ENCODE measurements at regions of chr22 and their contacts with region 1.

Region 1: DNA sequence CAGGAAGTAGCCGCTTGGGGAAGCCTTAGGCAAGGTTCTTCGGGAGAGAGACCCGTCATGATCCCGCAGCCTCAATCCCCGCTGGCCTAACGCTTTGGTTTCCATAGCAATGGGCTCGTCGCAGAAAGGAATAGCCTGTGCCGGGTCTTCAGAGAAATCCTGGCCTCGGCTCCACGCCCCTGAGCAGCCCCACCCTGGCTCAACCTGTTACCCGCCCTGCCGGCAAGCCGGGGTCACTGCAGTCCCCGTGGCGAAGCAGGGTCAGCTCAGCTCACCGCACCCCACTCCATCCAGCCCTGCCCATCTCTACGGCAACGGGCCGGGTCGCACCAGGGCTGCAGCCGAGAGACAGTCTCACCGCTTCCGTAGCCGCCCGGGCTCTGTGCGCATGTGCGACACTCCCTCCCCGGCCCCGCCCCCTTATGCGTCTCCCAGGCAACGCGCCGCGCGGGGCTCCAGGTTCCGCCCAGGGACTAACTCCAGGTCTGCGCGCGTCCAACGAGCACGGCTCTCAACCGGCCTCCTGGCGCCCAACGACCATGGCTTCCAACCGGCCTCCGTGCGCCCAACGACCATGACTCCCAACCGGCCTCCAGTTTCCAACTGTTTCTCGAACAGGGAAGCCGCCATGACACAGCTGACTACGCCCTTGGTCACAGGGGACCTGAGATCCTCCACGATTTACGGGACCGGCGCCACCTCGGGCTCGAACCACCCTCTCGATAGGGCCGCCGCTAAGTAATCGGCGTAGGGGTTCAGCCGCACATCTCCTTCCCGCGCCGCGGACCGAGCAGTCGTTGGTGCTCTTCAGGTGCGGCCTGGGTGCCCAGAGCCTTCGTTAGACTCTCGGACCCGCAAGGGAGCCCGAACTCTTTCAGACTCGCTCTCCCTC is at the start of gene DUSP18:
- DNase-seq: peak; percentile 85 to 88
- ATAC-seq: peak; percentile 97
- H3K4me3 ChIP-seq: peak within 1 kb of the TSS; percentile 64 to 94 (median 84)
- H3K27ac ChIP-seq: peak within 1 kb of the TSS; percentile 37 to 68 (median 52)
- H3K4me1 ChIP-seq: peaks cover 10 to 11% of the 10 kb centered on the region in 2 donors
- H3K27me3 ChIP-seq: no peaks in the 10 kb centered on the region
- CTCF ChIP-seq: peak; percentile 6 to 57 (median 37)
- POLR2A ChIP-seq: peak; percentile 16 to 33
- total RNA-seq, gene DUSP18: 0.82 to 4.3 (median 2.0) TPM

Region 2: DNA sequence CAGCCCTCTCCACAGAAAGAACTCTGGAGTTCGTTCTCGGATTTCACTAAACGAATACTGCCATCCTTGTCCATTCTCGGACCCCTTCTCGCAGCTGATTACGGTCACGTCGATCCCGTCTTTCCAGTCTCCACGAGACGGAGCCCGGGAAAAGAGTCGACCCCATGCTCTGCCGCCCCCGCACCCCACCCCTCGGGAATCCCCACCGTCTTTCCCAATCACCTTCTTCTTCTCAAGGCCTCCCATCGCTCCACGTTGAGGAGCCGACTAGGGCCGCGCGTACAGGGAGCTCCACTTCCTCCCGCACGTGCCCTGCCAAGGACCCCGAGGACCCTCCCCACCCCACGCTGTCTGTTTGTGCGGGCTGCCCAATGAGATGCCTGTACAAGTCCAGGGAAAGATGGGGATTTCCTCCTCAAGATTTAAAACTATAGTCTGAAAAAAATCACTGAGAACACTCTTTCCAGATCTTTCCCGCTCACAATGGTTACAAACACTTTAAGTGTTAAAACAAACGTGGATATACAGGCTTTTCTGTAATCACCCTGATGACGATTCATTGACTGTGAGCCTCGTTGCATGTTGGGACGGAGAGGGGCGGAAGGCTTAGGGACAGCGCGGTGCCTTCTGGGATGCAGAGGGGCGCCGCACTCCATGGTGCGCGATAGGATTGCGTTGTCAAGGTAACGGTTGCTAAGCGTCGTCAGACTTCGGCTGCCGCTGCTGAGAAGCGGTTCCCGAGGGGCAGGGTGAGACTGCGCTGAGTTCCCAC is 76.0 kb before region 1 on chr22 and contains the start of gene PES1:
- in situ Hi-C with region 1: no loop called
- intact Hi-C with region 1: loop called (anchors 5 kb)
- DNase-seq: peak; percentile 90 to 94
- ATAC-seq: peak; percentile 100
- H3K4me3 ChIP-seq: peak within 1 kb of the TSS; percentile 62 to 94 (median 90)
- H3K27ac ChIP-seq: peak within 1 kb of the TSS; percentile 78 to 94 (median 86)
- H3K4me1 ChIP-seq: peaks cover 13 to 19% of the 10 kb centered on the region in 2 donors
- H3K27me3 ChIP-seq: no peaks in the 10 kb centered on the region
- CTCF ChIP-seq: no peak
- POLR2A ChIP-seq: peak; percentile 44 to 59
- total RNA-seq, gene PES1: 56.3 to 72.0 (median 65.8) TPM

Region 3: GRCh38 chr22:30694171-30694639 is 26.5 kb after region 1 on chr22:
- in situ Hi-C with region 1: no loop called
- intact Hi-C with region 1: loop called (anchors 1 kb)
- DNase-seq: peak; percentile 25 to 40
- ATAC-seq: peak; percentile 70 to 71
- H3K4me3 ChIP-seq: peak overlapping the region; percentile 53 to 75 (median 67)
- H3K27ac ChIP-seq: peak overlapping the region; percentile 48 to 86 (median 74)
- H3K4me1 ChIP-seq: peaks cover 5 to 7% of the 10 kb centered on the region in 2 donors
- H3K27me3 ChIP-seq: no peaks in the 10 kb centered on the region
- CTCF ChIP-seq: no peak
- POLR2A ChIP-seq: no peak

Region 4: DNA sequence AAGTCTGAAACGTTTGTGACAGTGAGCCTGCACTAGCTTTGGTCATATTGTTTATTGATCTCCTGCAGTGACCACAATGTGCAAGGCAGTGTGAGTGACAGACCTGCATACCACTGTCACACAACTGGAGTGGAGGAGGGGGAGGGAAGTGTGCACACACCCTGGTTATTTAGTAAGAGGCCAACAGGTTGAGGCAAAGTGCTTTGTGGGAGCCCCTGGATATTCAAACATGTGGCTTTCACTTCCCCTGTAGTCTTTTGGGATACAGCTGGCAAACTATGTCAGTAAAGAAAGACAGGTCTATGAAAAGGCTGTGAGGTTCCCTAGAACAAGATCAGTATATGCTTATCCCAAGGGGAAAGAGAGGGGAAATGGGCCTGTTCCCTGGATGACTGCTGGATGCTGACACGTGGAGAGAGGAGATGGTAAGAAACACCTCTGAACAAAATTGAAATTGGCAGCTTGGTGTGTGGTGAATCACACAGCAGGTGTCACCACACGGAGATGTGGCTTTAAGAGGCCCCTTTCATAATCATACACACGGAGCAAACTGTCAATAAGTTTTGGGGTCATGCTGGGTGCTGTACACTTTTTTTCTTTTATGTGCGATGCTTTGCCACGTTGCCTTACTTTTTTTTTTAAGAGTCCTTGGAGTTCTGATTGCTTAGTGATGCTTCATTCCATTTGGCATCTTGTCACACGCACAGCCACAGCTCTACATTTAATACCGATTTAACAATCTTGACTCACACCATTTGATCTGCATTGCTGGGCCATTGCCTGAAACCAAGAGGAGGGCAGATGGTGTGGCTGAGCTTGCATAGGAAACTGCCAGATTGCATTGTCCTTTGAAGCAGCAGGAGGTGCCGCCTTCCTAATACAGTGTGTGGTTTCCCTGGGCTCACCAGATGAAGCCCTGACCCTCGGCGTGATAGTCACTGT is 38.2 kb after region 1 on chr22:
- in situ Hi-C with region 1: no loop called
- intact Hi-C with region 1: loop called (anchors 5 kb)
- DNase-seq: no peak
- ATAC-seq: peak; percentile 69 to 79
- H3K4me3 ChIP-seq: no peak overlapping the region
- H3K27ac ChIP-seq: peak overlapping the region in 2 of 4 donors; percentile 46 to 61
- H3K4me1 ChIP-seq: peaks cover 0 to 14% of the 10 kb centered on the region in 2 donors
- H3K27me3 ChIP-seq: no peaks in the 10 kb centered on the region
- CTCF ChIP-seq: no peak
- POLR2A ChIP-seq: no peak

Region 5: GRCh38 chr22:30853101-30853500 is 185.4 kb after region 1 on chr22:
- in situ Hi-C with region 1: no loop called
- intact Hi-C with region 1: no loop called
- DNase-seq: no peak
- ATAC-seq: no peak
- H3K4me3 ChIP-seq: no peak overlapping the region
- H3K27ac ChIP-seq: no peak overlapping the region
- H3K4me1 ChIP-seq: peaks cover 11 to 12% of the 10 kb centered on the region in 2 donors
- H3K27me3 ChIP-seq: no peaks in the 10 kb centered on the region
- CTCF ChIP-seq: no peak
- POLR2A ChIP-seq: no peak

Measured in gastrocnemius medialis (tissue), 4 donors.